Activated naive CD4-positive, alpha-beta T cell treated with anti-CD3 and anti-CD28 coated beads for 36 hours (primary cell): ENCODE measurements at regions of chr11 and their contacts with region 1.

Region 1: GRCh38 chr11:117134431-117134830 is 9.7 kb upstream of the PAFAH1B2 start:
- DNase-seq: no peak
- H3K4me3 Mint-ChIP-seq: no peak overlapping the region
- H3K27ac Mint-ChIP-seq: no peak overlapping the region
- H3K4me1 Mint-ChIP-seq: no peaks in the 10 kb centered on the region
- H3K27me3 Mint-ChIP-seq: no peaks in the 10 kb centered on the region

Region 2: GRCh38 chr11:116249561-116249960 is 884.9 kb before region 1 on chr11:
- CTCF ChIA-PET with region 1: no interaction called
- intact Hi-C with region 1: no loop called
- DNase-seq: no peak
- H3K4me3 Mint-ChIP-seq: no peak overlapping the region
- H3K27ac Mint-ChIP-seq: no peak overlapping the region
- H3K4me1 Mint-ChIP-seq: no peaks in the 10 kb centered on the region
- H3K27me3 Mint-ChIP-seq: no peaks in the 10 kb centered on the region

Region 3: GRCh38 chr11:117205211-117205818 is 70.9 kb after region 1 on chr11:
- CTCF ChIA-PET with region 1: no interaction called
- intact Hi-C with region 1: loop called (anchors 5 kb)
- DNase-seq: no peak
- H3K4me3 Mint-ChIP-seq: no peak overlapping the region
- H3K27ac Mint-ChIP-seq: no peak overlapping the region
- H3K4me1 Mint-ChIP-seq: no peaks in the 10 kb centered on the region
- H3K27me3 Mint-ChIP-seq: no peaks in the 10 kb centered on the region